ENCODE measurements at regions of chr4 and their contacts with region 1.

Region 1: DNA sequence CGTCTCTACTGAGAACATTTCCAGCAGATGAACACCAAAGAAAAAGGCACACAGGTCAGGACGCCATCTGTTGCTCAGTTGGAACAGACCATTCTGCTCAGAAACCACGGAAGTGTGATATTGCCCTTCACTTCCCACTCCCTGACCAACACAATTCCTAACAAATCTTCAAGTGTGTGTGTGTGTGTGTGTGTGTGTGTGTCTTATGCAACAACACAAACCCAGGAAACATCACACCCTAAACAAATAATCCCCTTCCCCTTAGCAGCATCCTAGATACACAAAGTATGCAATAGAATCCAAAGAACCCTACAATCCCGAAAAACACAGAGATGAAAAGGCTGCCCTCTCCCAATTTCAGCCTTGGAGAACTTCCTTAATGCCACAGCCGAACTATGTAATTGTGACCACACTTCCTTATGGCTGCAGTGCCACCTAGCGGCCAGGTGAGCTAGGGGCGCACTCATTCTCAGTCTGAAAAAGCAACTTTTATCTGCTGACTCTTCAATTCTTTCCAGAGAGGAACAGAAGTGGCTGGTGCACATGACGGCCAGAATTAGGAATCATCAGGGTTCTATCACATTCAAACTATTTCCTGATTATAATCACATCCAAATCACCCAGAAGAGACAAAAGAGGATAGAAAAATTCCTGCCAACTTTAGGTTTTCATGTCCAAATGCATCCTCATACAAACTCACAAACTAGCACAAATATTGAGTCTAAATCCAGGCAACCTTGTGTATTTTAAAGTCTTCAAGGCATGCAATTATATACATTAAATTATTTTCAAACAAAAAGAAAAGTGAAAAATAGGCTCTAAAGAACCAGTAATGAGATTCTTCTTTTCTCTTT is 164.9 kb downstream of the DHX15 start:
- ATAC-seq: peak in 7 of 8 experiments; percentile 48 to 99 (median 77)
- H3K4me3 ChIP-seq: no peak overlapping the region
- H3K27ac ChIP-seq: no peak overlapping the region
- H3K4me1 ChIP-seq: peaks cover 0 to 1% of the 10 kb centered on the region in 2 donors

Region 2: DNA sequence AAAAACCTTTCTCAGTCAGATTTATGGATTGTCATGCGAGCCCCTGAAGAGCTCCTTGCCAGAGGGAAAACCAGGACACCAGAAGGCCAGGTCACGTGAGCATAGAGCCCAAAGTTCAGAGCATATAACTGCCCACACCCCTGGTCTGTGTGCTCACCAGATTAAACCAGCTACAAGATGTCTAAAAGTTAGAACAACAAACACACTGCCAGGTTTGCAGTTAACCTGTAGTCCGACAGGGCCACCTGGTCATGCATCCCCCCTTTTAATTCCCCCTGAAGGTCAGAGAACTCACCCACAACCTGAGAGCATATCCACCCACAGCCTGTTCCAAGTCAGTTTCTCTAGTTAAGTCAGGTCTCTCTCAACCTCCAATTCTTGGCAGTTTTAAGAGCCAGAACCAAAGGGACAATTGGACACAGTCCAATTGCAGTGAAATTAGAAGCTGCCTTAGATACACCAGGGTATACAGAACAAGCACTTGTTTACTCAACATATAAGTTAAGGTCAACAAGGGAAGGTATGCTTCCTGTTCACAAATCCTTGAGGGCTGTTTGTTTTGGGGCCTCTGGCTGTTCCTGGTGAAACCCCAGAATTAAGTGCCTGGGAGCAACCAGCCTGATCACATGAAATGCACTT is 281.3 kb before region 1 on chr4:
- in situ Hi-C with region 1: loop called in 1 of 9 experiments (anchors 25 kb)
- ATAC-seq: peak in 1 of 8 experiments; percentile 44
- H3K4me3 ChIP-seq: no peak overlapping the region
- H3K27ac ChIP-seq: no peak overlapping the region
- H3K4me1 ChIP-seq: peaks cover 0 to 3% of the 10 kb centered on the region in 2 donors

Region 3: GRCh38 chr4:24244663-24245490 is 174.5 kb before region 1 on chr4:
- in situ Hi-C with region 1: loop called in 1 of 9 experiments (anchors 25 kb)
- ATAC-seq: peak; percentile 44 to 96 (median 91)
- H3K4me3 ChIP-seq: no peak overlapping the region
- H3K27ac ChIP-seq: peak overlapping the region in 1 of 2 donors; percentile 10
- H3K4me1 ChIP-seq: peaks cover 22 to 23% of the 10 kb centered on the region in 2 donors

Region 4: DNA sequence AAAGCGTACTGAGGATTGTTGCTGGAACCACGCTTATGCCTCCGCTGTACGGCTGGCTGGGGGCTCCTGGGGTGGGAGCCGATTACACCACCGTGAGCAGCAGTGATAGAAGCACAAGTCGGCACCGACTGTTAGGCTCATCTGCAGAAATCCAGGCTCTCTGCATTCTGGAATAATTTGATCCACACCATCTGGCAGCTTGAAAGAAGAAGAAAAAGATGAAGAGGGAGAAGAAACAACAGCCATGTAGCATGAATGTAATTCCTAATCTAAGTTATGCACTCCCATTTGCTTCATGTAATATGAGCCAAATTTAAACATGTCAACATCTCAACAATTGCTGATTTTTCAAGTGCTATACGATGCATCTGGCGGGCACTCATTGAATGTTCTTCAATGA is 249.5 kb after region 1 on chr4:
- in situ Hi-C with region 1: no loop called
- ATAC-seq: no peak
- H3K4me3 ChIP-seq: no peak overlapping the region
- H3K27ac ChIP-seq: no peak overlapping the region
- H3K4me1 ChIP-seq: no peaks in the 10 kb centered on the region